ENCODE measurements at regions of chr3 and their contacts with region 1.

Region 1: GRCh38 chr3:141402476-141403171 is 34.3 kb downstream of the ZBTB38 start:
- H3K4me3 Mint-ChIP-seq: peak overlapping the region; percentile 78
- H3K27ac Mint-ChIP-seq: peak overlapping the region; percentile 85
- H3K4me1 Mint-ChIP-seq: peaks cover 42% of the 10 kb centered on the region
- H3K27me3 Mint-ChIP-seq: no peaks in the 10 kb centered on the region

Region 2: GRCh38 chr3:141368062-141368924 is 34.3 kb before region 1 on chr3 and contains the start of gene ZBTB38:
- intact Hi-C with region 1: loop called (anchors 5 kb)
- H3K4me3 Mint-ChIP-seq: peak within 1 kb of the TSS; percentile 41
- H3K27ac Mint-ChIP-seq: peak within 1 kb of the TSS; percentile 87
- H3K4me1 Mint-ChIP-seq: peaks cover 34% of the 10 kb centered on the region
- H3K27me3 Mint-ChIP-seq: no peaks in the 10 kb centered on the region

Region 3: GRCh38 chr3:141441381-141442364 is 39.0 kb after region 1 on chr3:
- intact Hi-C with region 1: loop called (anchors 5 kb)
- H3K4me3 Mint-ChIP-seq: no peak overlapping the region
- H3K27ac Mint-ChIP-seq: peak overlapping the region; percentile 32
- H3K4me1 Mint-ChIP-seq: peaks cover 11% of the 10 kb centered on the region
- H3K27me3 Mint-ChIP-seq: no peaks in the 10 kb centered on the region

Measured in dendritic cell treated with granulocyte-macrophage colony-stimulating factor and Interleukin-4, amounts not matched to agents 40 ng/mL and 50 ng/mL, for 4 days (primary cell).